Right ventricle myocardium superior (tissue), 1 donor: ENCODE measurements at regions of chr3 and their contacts with region 1.

Region 1: DNA sequence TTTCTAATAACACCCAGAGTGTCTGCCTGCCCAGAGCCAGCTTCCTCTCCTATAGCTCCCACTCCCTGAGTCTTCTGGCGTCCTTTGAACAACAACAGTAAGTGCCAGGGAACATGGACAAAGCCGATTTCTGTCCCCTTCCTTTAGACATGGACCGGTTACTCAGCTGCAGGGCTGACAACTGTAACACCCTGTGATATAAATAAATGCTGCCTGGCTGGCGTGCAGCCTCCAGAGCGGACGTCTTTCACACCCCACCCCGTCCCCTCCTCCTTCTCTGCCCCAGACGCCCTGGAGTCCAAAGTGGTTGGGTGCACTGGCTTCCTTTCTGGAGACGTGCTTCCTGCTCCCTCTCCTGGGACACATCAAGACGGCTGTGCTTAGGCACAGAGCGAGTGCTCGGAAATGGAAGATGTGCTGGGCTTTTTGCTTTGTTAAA is 281.9 kb upstream of the LRRFIP2 start:
- DNase-seq: peak; percentile 88
- ATAC-seq: peak; percentile 77

Region 2: DNA sequence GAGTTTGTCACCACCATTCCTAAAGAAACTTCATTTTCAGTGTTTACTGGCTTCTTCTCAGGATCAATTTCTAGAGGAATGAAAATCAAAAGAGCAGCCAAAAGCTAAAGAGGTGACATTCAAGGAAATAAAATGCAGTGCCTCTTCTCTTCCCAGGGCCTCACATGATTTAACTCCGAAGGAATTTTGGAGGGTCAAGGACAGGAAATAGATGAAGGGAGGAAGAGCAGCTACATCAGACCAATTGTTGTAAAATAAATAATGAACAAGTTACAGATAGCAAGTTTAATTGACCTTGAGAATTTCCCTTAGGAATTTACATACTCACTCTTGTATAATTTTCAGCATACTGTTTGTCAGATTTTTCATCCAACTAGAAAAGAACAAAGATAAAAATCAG is 360.0 kb before region 1 on chr3:
- intact Hi-C with region 1: no loop called
- DNase-seq: no peak
- ATAC-seq: no peak

Region 3: GRCh38 chr3:37492977-37493471 is 36.7 kb after region 1 on chr3:
- intact Hi-C with region 1: loop called (anchors 5 kb)
- DNase-seq: no peak
- ATAC-seq: peak; percentile 73